IMR-90 (cell line): ENCODE measurements at regions of chr7 and their contacts with region 1.

Region 1: GRCh38 chr7:84331616-84332015 is 137.0 kb upstream of the SEMA3A start:
- DNase-seq: peak; percentile 16
- ATAC-seq: no peak
- H3K4me3 ChIP-seq: no peak overlapping the region
- H3K27ac ChIP-seq: no peak overlapping the region
- H3K4me1 ChIP-seq: no peaks in the 10 kb centered on the region
- H3K27me3 ChIP-seq: no peaks in the 10 kb centered on the region
- CTCF ChIP-seq: no peak
- POLR2A ChIP-seq: no peak
- RAD21 ChIP-seq: no peak

Region 2: GRCh38 chr7:82549616-82550285 is 1781.9 kb before region 1 on chr7:
- CTCF ChIA-PET with region 1: no interaction called
- POLR2A ChIA-PET with region 1: no interaction called
- dilution Hi-C with region 1: no loop called
- in situ Hi-C with region 1: no loop called
- intact Hi-C with region 1: no loop called
- DNase-seq: no peak
- ATAC-seq: no peak
- H3K4me3 ChIP-seq: no peak overlapping the region
- H3K27ac ChIP-seq: no peak overlapping the region
- H3K4me1 ChIP-seq: no peaks in the 10 kb centered on the region
- H3K27me3 ChIP-seq: no peaks in the 10 kb centered on the region
- CTCF ChIP-seq: no peak
- POLR2A ChIP-seq: no peak
- RAD21 ChIP-seq: no peak

Region 3: GRCh38 chr7:84286996-84287395 is 44.6 kb before region 1 on chr7:
- CTCF ChIA-PET with region 1: no interaction called
- POLR2A ChIA-PET with region 1: no interaction called
- dilution Hi-C with region 1: no loop called
- in situ Hi-C with region 1: no loop called
- intact Hi-C with region 1: loop called (anchors 5 kb)
- DNase-seq: no peak
- ATAC-seq: no peak
- H3K4me3 ChIP-seq: no peak overlapping the region
- H3K27ac ChIP-seq: no peak overlapping the region
- H3K4me1 ChIP-seq: no peaks in the 10 kb centered on the region
- H3K27me3 ChIP-seq: no peaks in the 10 kb centered on the region
- CTCF ChIP-seq: no peak
- POLR2A ChIP-seq: no peak
- RAD21 ChIP-seq: no peak